Heart left ventricle (tissue), 16 donors: ENCODE measurements at regions of chr10 and their contacts with region 1.

Region 1: DNA sequence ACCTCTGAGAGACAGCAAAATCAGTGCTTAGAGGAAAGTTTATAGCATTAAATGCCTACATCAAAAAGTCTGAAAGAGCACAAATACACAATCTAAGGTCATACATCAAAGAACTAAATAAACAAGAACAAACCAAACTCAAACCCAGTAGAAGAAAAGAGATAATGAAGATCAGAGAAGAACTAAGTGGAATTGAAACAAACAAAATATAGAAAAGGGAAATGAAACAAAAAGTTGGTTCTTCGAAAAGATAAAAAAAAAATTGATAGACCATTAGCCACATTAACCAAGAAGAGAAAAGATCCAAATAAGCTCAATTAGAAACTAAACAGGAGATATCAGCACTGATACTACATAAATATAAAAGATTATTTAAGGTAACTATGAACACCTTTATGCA is 280.0 kb upstream of the NRG3 start:
- DNase-seq: no peak
- ATAC-seq: no peak
- H3K4me3 ChIP-seq: no peak overlapping the region
- H3K27ac ChIP-seq: no peak overlapping the region
- H3K4me1 ChIP-seq: no peaks in the 10 kb centered on the region
- H3K27me3 ChIP-seq: no peaks in the 10 kb centered on the region
- CTCF ChIP-seq: no peak
- POLR2A ChIP-seq: no peak

Region 2: DNA sequence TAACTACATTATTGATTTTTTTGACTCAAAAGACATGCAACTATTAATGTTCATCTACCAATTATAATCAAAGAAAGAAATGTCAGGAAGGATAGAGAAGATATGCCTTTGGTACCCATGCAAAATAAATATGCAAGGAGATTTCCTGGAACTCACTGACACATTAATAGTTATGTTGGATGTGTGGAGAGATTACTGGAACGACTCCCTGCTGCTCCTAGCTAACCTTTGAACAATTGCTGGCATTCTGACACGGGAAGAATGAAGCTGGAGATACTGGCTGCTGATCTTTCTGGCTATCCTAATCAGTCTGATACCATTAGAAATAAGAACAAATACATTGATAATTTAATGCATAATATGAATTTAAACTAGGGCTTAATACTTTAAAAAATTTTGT is 227.9 kb before region 1 on chr10:
- intact Hi-C with region 1: no loop called
- DNase-seq: no peak
- ATAC-seq: no peak
- H3K4me3 ChIP-seq: no peak overlapping the region
- H3K27ac ChIP-seq: no peak overlapping the region
- H3K4me1 ChIP-seq: no peaks in the 10 kb centered on the region
- H3K27me3 ChIP-seq: no peaks in the 10 kb centered on the region
- CTCF ChIP-seq: no peak
- POLR2A ChIP-seq: no peak

Region 3: GRCh38 chr10:81546243-81546642 is 48.7 kb before region 1 on chr10:
- intact Hi-C with region 1: loop called in 1 of 10 experiments (anchors 2 kb)
- DNase-seq: no peak
- ATAC-seq: no peak
- H3K4me3 ChIP-seq: no peak overlapping the region
- H3K27ac ChIP-seq: no peak overlapping the region
- H3K4me1 ChIP-seq: no peaks in the 10 kb centered on the region
- H3K27me3 ChIP-seq: no peaks in the 10 kb centered on the region
- CTCF ChIP-seq: no peak
- POLR2A ChIP-seq: no peak

Region 4: DNA sequence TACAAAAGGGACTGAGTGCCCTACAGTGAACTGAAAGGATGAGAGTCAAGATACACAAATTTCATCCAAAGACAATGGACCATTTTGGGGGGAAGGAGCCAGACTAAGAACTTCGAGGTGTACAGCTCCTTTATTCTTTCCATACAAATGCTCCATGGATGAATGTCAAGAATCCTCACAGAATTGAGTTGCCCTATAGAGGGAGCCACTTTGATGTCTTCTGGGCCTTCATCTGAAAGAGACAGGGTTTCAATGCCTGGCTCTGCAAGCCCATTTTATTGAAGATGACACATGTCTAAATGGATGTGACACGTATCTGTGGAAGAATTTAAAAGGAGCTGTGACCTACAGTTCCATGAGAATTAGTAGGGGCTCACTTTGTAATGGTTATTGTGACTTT is 248.0 kb after region 1 on chr10:
- intact Hi-C with region 1: no loop called
- DNase-seq: no peak
- ATAC-seq: no peak
- H3K4me3 ChIP-seq: no peak overlapping the region
- H3K27ac ChIP-seq: no peak overlapping the region
- H3K4me1 ChIP-seq: no peaks in the 10 kb centered on the region
- H3K27me3 ChIP-seq: peaks cover 0 to 4% (median 0%) of the 10 kb centered on the region in 9 donors
- CTCF ChIP-seq: no peak
- POLR2A ChIP-seq: no peak